SK-N-SH (cell line): ENCODE measurements at regions of chr11 and their contacts with region 1.

Region 1: DNA sequence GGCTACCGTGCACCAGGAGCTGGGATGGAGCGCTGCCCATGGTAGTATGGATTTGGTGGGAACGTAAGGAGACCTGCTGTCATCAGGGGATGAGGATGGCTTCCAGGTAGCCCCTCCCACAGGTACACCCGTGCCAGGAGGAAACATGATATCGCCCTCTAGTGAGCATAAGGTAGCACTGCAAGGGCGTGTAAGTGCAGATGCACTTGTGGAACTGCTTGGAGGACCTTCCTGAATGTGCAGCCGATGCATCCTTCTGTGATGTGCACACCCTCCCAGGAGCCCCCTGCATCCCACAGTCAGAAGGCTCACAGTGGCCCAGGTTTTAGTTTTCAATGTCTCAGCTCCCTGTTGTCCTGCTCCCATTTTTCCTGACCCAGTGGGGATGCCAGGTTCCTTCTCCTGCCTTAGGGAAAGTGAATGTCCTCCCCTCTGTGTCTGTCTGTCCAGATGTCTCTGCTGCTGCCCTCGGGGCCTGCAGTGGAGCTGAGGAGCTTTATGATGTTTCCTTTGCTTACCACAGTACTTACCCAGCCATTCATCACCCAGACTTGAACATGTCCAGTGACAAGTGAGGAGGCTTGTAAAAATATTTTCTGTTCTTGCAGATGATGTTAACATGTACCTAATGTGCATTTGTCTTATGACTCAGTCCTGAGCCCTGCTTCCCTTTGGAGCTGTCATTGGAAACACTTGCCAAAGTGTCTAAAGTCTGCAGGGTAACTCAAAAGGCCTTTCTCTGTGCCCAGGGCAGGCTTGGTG is 49.2 kb downstream of the DBX1 start:
- DNase-seq: peak; percentile 78
- H3K4me3 ChIP-seq: peak overlapping the region in 1 of 2 experiments; percentile 10; a peak in 1 of 4 replicates
- H3K27ac ChIP-seq: peak overlapping the region; percentile 95 to 97
- H3K4me1 ChIP-seq: peaks cover 25 to 49% of the 10 kb centered on the region in 2 experiments
- H3K27me3 ChIP-seq: no peaks in the 10 kb centered on the region
- CTCF ChIP-seq: peak; percentile 96
- EP300 ChIP-seq: peak in 1 of 2 experiments; percentile 98; a peak in 3 of 4 replicates
- RAD21 ChIP-seq: peak; percentile 68

Region 2: DNA sequence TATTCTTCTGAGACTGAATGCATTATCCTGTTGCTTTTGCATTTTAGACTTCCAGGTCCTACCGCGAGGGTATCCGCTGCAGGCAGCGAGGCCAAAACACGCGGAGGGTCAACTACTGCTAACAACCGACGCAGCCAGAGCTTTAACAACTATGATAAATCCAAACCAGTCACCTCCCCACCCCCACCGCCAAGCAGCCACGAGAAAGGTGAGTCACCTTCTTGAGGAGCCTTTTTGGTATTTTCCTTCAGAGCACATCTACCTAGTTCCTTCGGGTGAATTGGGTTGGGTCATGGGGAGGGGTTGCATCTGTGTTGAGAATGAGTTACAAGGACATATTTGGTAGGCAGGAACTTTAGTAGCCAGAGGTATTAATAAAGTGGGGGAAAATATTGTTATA is 218.7 kb before region 1 on chr11:
- CTCF ChIA-PET with region 1: no interaction called
- POLR2A ChIA-PET with region 1: no interaction called
- DNase-seq: no peak
- H3K4me3 ChIP-seq: no peak overlapping the region
- H3K27ac ChIP-seq: no peak overlapping the region; a peak in 1 of 4 replicates
- H3K4me1 ChIP-seq: peaks cover 9 to 14% of the 10 kb centered on the region in 2 experiments
- H3K27me3 ChIP-seq: no peaks in the 10 kb centered on the region
- CTCF ChIP-seq: no peak
- EP300 ChIP-seq: no peak
- RAD21 ChIP-seq: no peak

Region 3: DNA sequence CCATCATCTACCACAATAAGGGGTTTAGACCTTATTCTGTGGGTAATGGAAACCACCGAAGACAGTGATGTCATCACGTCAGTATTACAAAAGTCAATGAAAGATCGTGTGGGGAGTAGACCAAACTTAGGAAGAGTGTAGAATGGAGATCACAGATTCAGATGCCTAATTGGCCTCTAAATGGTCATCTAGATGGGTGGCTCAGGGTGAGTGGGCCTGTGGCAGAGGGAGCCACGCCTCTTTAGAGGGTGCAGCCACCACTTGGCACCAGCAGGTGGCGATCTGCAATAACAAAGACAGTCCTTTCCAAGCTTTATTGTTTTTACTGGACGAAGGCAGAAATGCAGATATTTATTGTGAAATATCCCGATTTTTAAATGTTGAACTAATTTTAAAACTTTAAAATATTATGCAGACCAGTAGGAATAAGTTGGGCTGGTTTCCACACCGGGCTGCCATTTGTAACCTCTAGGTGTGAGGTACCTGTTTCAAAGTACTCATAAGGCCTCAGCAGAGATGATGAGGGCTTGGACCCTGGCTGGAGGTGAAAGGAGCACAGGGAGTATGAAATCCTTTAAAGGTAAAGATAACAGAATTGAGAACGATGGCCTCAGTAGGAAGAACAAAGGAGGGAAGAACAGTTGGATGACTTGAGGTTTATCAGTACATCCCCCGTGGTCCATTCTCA is 172.8 kb before region 1 on chr11:
- CTCF ChIA-PET with region 1: interaction called, 16 read pairs
- POLR2A ChIA-PET with region 1: no interaction called
- DNase-seq: peak; percentile 77
- H3K4me3 ChIP-seq: peak overlapping the region in 1 of 2 experiments; percentile 31; a peak in 1 of 4 replicates
- H3K27ac ChIP-seq: peak overlapping the region; percentile 28 to 93
- H3K4me1 ChIP-seq: peaks cover 22 to 36% of the 10 kb centered on the region in 2 experiments
- H3K27me3 ChIP-seq: no peaks in the 10 kb centered on the region
- CTCF ChIP-seq: peak; percentile 96
- EP300 ChIP-seq: no peak
- RAD21 ChIP-seq: peak; percentile 69

Region 4: DNA sequence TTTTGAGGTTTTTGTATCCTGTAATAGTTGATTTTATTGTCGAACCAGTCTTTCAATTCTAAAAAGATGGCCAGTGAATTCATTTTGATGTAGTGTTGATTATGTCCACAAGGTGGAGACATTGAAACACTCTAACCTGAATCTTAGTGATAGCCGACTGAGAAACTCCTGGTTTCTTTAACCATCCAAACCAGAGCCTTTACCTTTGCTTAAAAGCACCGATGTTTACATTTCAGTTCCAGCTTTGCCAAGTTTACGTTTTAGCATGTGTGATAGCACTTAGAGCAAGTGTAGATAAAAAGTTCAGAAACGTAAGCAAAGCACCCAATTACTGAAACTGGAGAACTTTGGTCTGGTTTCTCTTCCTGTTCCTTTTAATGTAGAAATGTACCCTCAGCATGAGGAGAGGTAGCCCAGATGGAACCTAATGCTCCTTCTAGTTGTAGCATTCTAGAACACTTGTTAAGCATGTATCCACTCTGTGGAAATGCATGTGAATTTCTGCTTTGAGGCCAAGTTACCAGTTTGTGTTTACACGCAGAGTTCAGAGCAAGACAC is 159.5 kb before region 1 on chr11:
- CTCF ChIA-PET with region 1: interaction called, 51 read pairs
- POLR2A ChIA-PET with region 1: interaction called, 3 read pairs
- DNase-seq: peak; percentile 42
- H3K4me3 ChIP-seq: no peak overlapping the region; a peak in 1 of 4 replicates
- H3K27ac ChIP-seq: peak overlapping the region; percentile 83 to 91
- H3K4me1 ChIP-seq: peaks cover 45 to 49% of the 10 kb centered on the region in 2 experiments
- H3K27me3 ChIP-seq: no peaks in the 10 kb centered on the region
- CTCF ChIP-seq: peak; percentile 72
- EP300 ChIP-seq: no peak
- RAD21 ChIP-seq: peak; percentile 77

Region 5: DNA sequence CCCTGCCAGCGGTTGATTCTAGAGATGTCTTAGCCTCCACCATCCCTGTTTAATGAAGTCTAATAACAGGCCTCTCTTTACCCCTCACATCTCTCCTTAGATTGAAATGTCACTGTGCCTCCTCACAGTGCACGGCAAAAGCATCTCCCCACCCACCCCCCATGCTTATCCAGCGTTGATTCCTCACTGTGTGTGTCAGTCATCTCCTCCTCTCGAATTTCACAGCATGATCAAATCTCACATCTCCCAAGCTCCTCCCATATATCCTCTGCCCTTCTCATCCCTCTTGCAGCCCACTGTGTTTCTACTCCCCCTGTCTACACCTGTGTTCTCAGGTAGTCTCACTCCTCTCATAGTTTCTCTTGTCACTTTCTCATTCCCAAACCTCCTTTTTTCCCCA is 35.5 kb before region 1 on chr11:
- CTCF ChIA-PET with region 1: interaction called, 12 read pairs
- POLR2A ChIA-PET with region 1: no interaction called
- DNase-seq: no peak
- H3K4me3 ChIP-seq: no peak overlapping the region
- H3K27ac ChIP-seq: no peak overlapping the region; a peak in 1 of 4 replicates
- H3K4me1 ChIP-seq: no peaks in the 10 kb centered on the region
- H3K27me3 ChIP-seq: no peaks in the 10 kb centered on the region
- CTCF ChIP-seq: no peak
- EP300 ChIP-seq: no peak
- RAD21 ChIP-seq: no peak

Region 6: DNA sequence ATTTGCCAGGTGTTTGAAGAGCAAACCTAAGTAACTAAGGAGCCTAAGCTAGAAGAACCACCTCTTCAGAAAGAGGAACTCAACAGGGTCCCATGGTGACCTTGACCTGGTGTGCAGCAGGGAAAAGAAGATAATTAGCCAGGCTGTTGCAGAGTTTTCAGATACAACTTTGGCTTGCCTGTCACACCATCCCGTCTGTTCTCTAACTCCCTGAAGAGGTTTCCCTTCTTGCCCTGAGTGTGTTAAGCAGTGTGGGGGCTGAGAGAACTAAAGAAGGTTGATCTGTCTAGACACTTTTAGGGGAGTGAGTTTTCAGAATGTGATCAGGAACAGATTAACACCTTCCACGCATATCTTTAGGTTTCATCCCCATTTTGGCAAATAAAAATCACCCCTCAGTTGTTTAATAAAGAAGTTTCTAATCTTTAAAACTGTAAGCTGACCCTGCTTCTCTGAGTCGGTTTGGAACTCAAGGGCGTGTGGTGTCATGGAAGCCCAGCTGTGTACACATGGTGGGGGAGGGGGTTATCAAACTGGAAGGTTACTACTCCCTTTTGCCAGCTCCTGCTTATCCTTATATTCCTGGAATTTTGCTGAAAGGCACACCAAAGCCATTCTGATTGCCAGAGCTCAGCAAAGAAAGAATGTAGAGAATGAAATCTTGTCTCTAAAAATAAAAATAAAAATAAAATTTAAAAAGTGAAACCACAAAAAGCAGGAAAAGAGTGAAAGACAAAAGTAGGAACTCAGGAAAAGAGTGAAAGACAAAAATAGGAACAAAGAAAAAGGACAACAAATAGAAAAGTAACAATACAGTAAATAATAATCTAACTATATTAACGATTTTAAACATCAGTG is 21.1 kb before region 1 on chr11:
- CTCF ChIA-PET with region 1: interaction called, 60 read pairs
- POLR2A ChIA-PET with region 1: no interaction called
- DNase-seq: no peak
- H3K4me3 ChIP-seq: no peak overlapping the region
- H3K27ac ChIP-seq: peak overlapping the region; percentile 49 to 80
- H3K4me1 ChIP-seq: peaks cover 0 to 3% of the 10 kb centered on the region in 2 experiments; a peak in 3 of 4 replicates
- H3K27me3 ChIP-seq: no peaks in the 10 kb centered on the region
- CTCF ChIP-seq: no peak
- EP300 ChIP-seq: no peak
- RAD21 ChIP-seq: no peak

Region 7: DNA sequence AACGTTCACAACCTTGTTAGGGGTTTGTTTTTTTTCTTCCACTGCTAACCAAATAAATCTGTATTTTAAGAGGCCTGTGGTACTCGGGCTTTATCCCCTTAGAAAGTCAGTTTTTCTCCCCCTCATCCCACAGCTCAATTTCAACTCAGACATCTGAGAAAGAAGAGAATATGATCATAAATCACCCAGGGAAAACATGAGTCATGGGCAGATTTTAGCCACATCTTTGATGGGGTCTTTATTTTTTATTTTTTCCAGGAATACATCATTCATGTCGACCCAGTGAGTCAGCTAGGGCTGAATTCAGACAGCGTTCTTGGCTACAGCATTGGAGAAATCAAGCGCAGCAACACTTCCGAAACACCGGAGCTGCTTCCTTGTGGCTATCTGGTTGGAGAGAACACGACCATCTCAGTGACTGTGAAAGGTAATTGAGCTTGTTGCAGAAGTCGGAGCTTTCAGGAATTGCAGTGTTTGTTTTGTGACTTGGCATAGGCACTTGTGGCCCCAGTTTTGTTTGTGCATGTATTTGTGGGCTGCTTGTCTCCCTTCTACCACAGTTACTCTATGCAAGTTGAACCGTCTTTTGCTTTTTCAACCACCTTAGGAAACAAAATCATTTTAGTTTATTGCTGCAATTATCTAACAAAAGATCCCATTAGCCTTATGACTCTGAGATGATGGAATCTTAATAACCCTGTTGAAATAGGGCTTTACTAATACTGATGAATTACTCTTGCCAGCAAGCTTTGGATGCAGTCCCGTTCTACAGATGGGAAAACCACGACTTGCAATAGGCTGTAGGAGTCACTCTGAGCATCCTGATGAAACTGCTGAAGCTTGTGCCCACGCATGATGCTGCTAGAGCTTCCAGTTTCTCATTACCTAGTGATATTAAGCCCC is 13.5 kb before region 1 on chr11:
- CTCF ChIA-PET with region 1: interaction called, 60 read pairs
- POLR2A ChIA-PET with region 1: no interaction called
- DNase-seq: no peak
- H3K4me3 ChIP-seq: no peak overlapping the region; a peak in 2 of 4 replicates
- H3K27ac ChIP-seq: peak overlapping the region; percentile 87 to 100
- H3K4me1 ChIP-seq: peaks cover 8 to 20% of the 10 kb centered on the region in 2 experiments
- H3K27me3 ChIP-seq: no peaks in the 10 kb centered on the region
- CTCF ChIP-seq: no peak
- EP300 ChIP-seq: peak in 1 of 2 experiments; percentile 97; a peak in 3 of 4 replicates
- RAD21 ChIP-seq: no peak

Region 8: DNA sequence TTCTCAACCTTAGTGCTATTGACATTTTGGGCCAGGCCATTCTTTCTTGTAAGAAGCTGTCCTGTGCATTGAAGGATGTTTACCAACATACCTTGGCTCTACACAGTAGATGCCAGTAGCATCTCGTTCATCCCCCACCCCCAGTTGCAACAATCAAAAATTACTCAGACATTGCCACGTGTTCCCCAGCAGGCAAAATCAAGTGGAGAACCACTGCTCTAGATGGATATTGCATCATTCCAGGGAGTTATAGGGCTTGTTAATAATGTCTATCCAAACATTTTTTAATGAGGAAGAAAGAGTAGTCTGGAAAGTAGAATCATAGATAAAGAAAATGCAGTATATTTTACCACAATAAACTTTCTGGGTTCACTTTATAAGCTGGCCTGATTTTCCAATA is 340.5 kb after region 1 on chr11:
- CTCF ChIA-PET with region 1: no interaction called
- POLR2A ChIA-PET with region 1: no interaction called
- DNase-seq: no peak
- H3K4me3 ChIP-seq: no peak overlapping the region
- H3K27ac ChIP-seq: peak overlapping the region in 1 of 2 experiments; percentile 92; a peak in 2 of 4 replicates
- H3K4me1 ChIP-seq: peaks cover 0 to 18% of the 10 kb centered on the region in 2 experiments; a peak in 2 of 4 replicates
- H3K27me3 ChIP-seq: no peaks in the 10 kb centered on the region
- CTCF ChIP-seq: no peak
- EP300 ChIP-seq: no peak
- RAD21 ChIP-seq: no peak